Activated CD4-positive, alpha-beta memory T cell treated with anti-CD3 and anti-CD28 coated beads for 36 hours (primary cell): ENCODE measurements at regions of chr15 and their contacts with region 1.

Region 1: DNA sequence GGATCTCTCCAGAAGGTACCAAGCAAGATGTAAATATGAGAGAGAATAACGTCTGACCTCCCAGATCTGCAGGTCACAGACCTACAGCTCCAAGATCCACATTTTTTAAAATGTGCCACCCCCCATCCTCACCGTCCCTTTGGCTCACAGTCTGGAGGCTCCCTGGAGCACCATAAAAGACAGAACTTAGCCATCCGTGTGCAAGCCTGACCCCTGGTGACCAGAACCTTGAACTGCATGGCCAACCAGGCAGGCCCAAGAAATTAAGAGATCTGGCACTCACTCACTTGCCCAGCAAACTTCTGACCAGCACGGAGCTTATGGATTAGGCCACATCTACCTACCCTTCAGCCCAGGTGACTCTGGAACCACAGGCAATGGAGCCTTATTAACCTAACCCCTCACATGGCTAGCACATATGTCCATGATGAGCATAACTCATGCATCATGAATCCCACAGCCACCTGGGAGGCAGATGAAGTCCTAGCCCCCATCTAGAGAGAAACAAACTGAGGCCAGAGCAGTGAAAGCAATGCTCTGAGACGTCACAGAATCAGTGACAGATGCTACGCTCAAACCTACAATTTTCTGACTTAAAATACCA is 275.3 kb downstream of the UACA start:
- DNase-seq: peak; percentile 84
- H3K4me3 Mint-ChIP-seq: peak overlapping the region; percentile 8
- H3K27ac Mint-ChIP-seq: peak overlapping the region; percentile 36
- H3K4me1 Mint-ChIP-seq: peaks cover 59% of the 10 kb centered on the region
- H3K27me3 Mint-ChIP-seq: peaks cover 39% of the 10 kb centered on the region

Region 2: DNA sequence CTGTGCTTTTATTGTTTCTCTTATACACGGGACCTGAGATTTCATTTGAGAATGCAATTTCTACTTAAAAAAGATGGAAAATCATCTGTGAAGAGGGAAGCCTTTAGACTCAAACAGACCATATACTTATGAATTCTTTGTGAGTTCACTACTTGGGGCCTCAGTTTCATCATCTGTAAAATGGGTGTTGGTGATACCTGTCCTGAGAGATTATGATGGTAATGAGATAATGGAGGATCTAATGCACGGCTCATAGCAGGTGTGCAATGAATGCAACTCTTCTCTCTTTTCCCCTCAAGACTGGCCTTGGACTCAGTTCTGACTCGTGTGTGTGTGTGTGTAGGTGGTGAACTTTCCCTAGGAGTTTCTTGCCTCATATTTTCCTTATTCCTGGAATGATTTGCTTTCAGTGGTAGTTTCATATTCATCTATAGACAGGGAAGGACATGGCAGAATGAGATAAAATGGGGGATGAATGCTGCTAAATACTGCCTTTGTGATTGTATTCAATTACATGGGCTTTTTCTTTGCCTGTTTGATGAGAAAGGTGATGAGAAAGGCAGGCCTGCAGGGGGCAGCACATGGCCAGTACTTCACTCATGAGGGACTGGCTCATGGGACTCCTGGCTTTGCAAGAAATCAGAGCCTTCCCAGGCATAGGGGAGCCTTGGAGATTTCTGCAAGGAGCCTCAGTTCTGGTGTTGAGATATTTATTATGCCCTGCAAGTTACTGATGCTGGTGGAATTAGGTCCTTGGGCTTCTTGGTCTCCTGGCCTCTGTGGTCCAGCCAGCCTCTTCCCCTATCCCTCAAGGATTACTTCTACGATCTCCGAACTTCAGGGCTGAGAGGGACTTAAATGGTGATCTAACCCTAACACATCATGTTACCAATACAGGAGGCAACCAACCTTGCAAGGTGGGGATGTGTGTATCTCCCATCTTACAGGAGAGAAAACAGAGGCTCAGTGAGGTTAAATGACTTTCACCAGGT is 964.8 kb before region 1 on chr15:
- CTCF ChIA-PET with region 1: no interaction called
- POLR2A ChIA-PET with region 1: no interaction called
- intact Hi-C with region 1: loop called (anchors 5 kb)
- DNase-seq: peak; percentile 84
- H3K4me3 Mint-ChIP-seq: no peak overlapping the region
- H3K27ac Mint-ChIP-seq: no peak overlapping the region
- H3K4me1 Mint-ChIP-seq: peaks cover 4% of the 10 kb centered on the region
- H3K27me3 Mint-ChIP-seq: peaks cover 2% of the 10 kb centered on the region

Region 3: GRCh38 chr15:69760890-69761568 is 727.1 kb before region 1 on chr15:
- CTCF ChIA-PET with region 1: interaction called, 5 read pairs
- POLR2A ChIA-PET with region 1: interaction called, 3 read pairs
- intact Hi-C with region 1: loop called (anchors 1 kb)
- DNase-seq: peak; percentile 93
- H3K4me3 Mint-ChIP-seq: peak overlapping the region; percentile 41
- H3K27ac Mint-ChIP-seq: peak overlapping the region; percentile 89
- H3K4me1 Mint-ChIP-seq: peaks cover 73% of the 10 kb centered on the region
- H3K27me3 Mint-ChIP-seq: peaks cover 3% of the 10 kb centered on the region

Region 4: GRCh38 chr15:70259028-70259424 is 229.1 kb before region 1 on chr15:
- CTCF ChIA-PET with region 1: no interaction called
- POLR2A ChIA-PET with region 1: no interaction called
- intact Hi-C with region 1: loop called (anchors 5 kb)
- DNase-seq: no peak
- H3K4me3 Mint-ChIP-seq: peak overlapping the region; percentile 48
- H3K27ac Mint-ChIP-seq: peak overlapping the region; percentile 63
- H3K4me1 Mint-ChIP-seq: peaks cover 40% of the 10 kb centered on the region
- H3K27me3 Mint-ChIP-seq: peaks cover 1% of the 10 kb centered on the region

Region 5: GRCh38 chr15:70355275-70355795 is 132.8 kb before region 1 on chr15:
- CTCF ChIA-PET with region 1: no interaction called
- POLR2A ChIA-PET with region 1: no interaction called
- intact Hi-C with region 1: no loop called
- DNase-seq: no peak
- H3K4me3 Mint-ChIP-seq: no peak overlapping the region
- H3K27ac Mint-ChIP-seq: no peak overlapping the region
- H3K4me1 Mint-ChIP-seq: no peaks in the 10 kb centered on the region
- H3K27me3 Mint-ChIP-seq: peaks cover 3% of the 10 kb centered on the region

Region 6: GRCh38 chr15:70466895-70467529 is 21.1 kb before region 1 on chr15:
- CTCF ChIA-PET with region 1: interaction called, 37 read pairs
- POLR2A ChIA-PET with region 1: no interaction called
- intact Hi-C with region 1: no loop called
- DNase-seq: peak; percentile 66
- H3K4me3 Mint-ChIP-seq: no peak overlapping the region
- H3K27ac Mint-ChIP-seq: no peak overlapping the region
- H3K4me1 Mint-ChIP-seq: no peaks in the 10 kb centered on the region
- H3K27me3 Mint-ChIP-seq: peaks cover 22% of the 10 kb centered on the region

Region 7: DNA sequence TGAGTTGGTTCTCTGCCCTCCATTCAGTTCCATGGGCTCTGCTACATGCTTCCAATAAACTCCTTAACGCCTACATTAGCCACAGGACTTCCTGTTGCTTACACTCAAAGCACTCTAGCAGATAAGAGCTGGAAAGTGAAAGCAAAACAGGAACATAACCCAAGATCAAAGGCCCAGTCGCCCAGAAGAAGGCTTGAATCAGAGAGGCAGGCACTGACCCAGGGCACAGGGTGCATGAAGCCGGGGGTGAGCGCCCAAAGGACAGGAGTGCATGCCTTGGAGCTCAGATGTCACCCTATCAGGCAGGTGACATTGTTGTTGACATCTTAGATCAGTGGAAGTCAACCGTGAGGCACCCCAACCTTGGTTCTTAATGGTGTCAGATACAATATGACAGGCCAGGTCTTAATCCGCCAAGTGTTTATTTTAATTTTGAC is 40.2 kb after region 1 on chr15:
- CTCF ChIA-PET with region 1: interaction called, 7 read pairs
- POLR2A ChIA-PET with region 1: interaction called, 3 read pairs
- intact Hi-C with region 1: loop called (anchors 2 kb)
- DNase-seq: peak; percentile 79
- H3K4me3 Mint-ChIP-seq: peak overlapping the region; percentile 33
- H3K27ac Mint-ChIP-seq: peak overlapping the region; percentile 52
- H3K4me1 Mint-ChIP-seq: peaks cover 60% of the 10 kb centered on the region
- H3K27me3 Mint-ChIP-seq: no peaks in the 10 kb centered on the region